ENCODE measurements at regions of chr4 and their contacts with region 1.

Region 1: GRCh38 chr4:118352843-118353533 is at the start of gene PRSS12:
- DNase-seq: peak; percentile 82 to 89 (median 84)
- ATAC-seq: peak; percentile 91
- H3K4me3 ChIP-seq: peak within 1 kb of the TSS; percentile 55 to 63
- H3K27ac ChIP-seq: peak within 1 kb of the TSS; percentile 41 to 85 (median 74)
- H3K4me1 ChIP-seq: peaks cover 12% of the 10 kb centered on the region
- H3K27me3 ChIP-seq: no peaks in the 10 kb centered on the region
- CTCF ChIP-seq: peak; percentile 67 to 93 (median 89)
- POLR2A ChIP-seq: peak; percentile 21 to 46 (median 33)
- total RNA-seq, gene PRSS12: 12.2 to 15.8 TPM

Region 2: DNA sequence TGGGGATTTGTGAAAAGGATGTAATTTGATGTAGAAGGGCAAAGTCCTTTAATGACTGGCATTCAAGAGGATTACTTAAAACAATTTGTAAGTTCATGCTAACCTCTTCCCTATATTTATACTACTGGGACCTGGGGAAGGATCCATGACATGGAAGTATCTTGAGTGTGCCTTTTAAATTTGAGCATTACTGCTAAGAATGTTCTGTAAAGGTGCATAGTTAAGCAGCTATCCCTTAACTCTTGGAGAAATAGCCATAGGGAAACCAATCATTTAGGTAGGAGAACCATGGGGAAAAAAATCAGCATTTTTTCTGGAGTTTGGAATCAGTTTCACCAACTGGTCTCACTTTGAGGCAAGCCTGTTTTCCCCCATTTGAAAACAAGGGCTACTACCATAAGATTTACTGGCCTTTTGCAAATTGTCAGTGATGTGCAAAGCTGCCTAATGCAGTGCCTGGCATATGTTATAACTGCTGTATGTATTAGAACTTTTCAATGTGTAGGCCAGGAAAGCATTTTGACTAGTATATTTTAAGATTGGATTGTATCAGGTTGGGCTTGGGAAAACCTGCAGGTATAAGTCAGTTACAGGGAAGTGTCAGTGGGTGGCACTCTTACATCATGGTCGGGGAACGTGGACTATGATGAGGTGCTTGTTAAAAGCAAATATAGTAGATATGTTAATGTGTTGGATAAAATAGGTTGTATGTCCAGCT is 72.3 kb before region 1 on chr4:
- intact Hi-C with region 1: loop called (anchors 5 kb)
- DNase-seq: peak; percentile 71 to 83 (median 72)
- ATAC-seq: peak; percentile 65
- H3K4me3 ChIP-seq: peak overlapping the region in 1 of 2 donors; percentile 94
- H3K27ac ChIP-seq: peak overlapping the region; percentile 28 to 97 (median 82)
- H3K4me1 ChIP-seq: peaks cover 54% of the 10 kb centered on the region
- H3K27me3 ChIP-seq: no peaks in the 10 kb centered on the region
- CTCF ChIP-seq: peak; percentile 21 to 83 (median 72)
- POLR2A ChIP-seq: peak in 1 of 3 donors; percentile 40

Region 3: GRCh38 chr4:118589471-118590055 is 236.6 kb after region 1 on chr4:
- intact Hi-C with region 1: no loop called
- DNase-seq: no peak
- ATAC-seq: no peak
- H3K4me3 ChIP-seq: no peak overlapping the region
- H3K27ac ChIP-seq: no peak overlapping the region
- H3K4me1 ChIP-seq: peaks cover 17% of the 10 kb centered on the region
- H3K27me3 ChIP-seq: no peaks in the 10 kb centered on the region
- CTCF ChIP-seq: no peak
- POLR2A ChIP-seq: no peak